ENCODE measurements at regions of chr1 and their contacts with region 1.

Region 1: GRCh38 chr1:212738330-212738729 is 38.7 kb upstream of the BATF3 start:
- DNase-seq: no peak
- H3K4me3 Mint-ChIP-seq: peak overlapping the region; percentile 13
- H3K27ac Mint-ChIP-seq: peak overlapping the region; percentile 73
- H3K4me1 Mint-ChIP-seq: peaks cover 20% of the 10 kb centered on the region
- H3K27me3 Mint-ChIP-seq: no peaks in the 10 kb centered on the region

Region 2: GRCh38 chr1:212710566-212710965 is 27.8 kb before region 1 on chr1:
- intact Hi-C with region 1: no loop called
- DNase-seq: no peak
- H3K4me3 Mint-ChIP-seq: no peak overlapping the region
- H3K27ac Mint-ChIP-seq: no peak overlapping the region
- H3K4me1 Mint-ChIP-seq: peaks cover 22% of the 10 kb centered on the region
- H3K27me3 Mint-ChIP-seq: peaks cover 1% of the 10 kb centered on the region

Region 3: GRCh38 chr1:212721388-212722247 is 16.7 kb before region 1 on chr1:
- intact Hi-C with region 1: loop called (anchors 2 kb)
- DNase-seq: peak; percentile 83
- H3K4me3 Mint-ChIP-seq: peak overlapping the region; percentile 69
- H3K27ac Mint-ChIP-seq: peak overlapping the region; percentile 78
- H3K4me1 Mint-ChIP-seq: peaks cover 34% of the 10 kb centered on the region
- H3K27me3 Mint-ChIP-seq: peaks cover 14% of the 10 kb centered on the region

Measured in activated CD4-positive, alpha-beta T cell treated with anti-CD3 and anti-CD28 coated beads, Interleukin-2, amount 10 ng/mL, durations not matched to agents 24 days and 14 days (primary cell).